H1 (cell line): ENCODE measurements at regions of chr10 and their contacts with region 1.

Region 1: GRCh38 chr10:120423431-120424197 is 33.4 kb upstream of the PLPP4 start:
- DNase-seq: peak; percentile 2 to 79
- H3K4me3 ChIP-seq: no peak overlapping the region
- H3K27ac ChIP-seq: no peak overlapping the region
- H3K4me1 ChIP-seq: no peaks in the 10 kb centered on the region
- H3K27me3 ChIP-seq: no peaks in the 10 kb centered on the region
- CTCF ChIP-seq: peak; percentile 77 to 93 (median 83)
- EP300 ChIP-seq: no peak
- POLR2A ChIP-seq: no peak
- RAD21 ChIP-seq: peak; percentile 87 to 92

Region 2: DNA sequence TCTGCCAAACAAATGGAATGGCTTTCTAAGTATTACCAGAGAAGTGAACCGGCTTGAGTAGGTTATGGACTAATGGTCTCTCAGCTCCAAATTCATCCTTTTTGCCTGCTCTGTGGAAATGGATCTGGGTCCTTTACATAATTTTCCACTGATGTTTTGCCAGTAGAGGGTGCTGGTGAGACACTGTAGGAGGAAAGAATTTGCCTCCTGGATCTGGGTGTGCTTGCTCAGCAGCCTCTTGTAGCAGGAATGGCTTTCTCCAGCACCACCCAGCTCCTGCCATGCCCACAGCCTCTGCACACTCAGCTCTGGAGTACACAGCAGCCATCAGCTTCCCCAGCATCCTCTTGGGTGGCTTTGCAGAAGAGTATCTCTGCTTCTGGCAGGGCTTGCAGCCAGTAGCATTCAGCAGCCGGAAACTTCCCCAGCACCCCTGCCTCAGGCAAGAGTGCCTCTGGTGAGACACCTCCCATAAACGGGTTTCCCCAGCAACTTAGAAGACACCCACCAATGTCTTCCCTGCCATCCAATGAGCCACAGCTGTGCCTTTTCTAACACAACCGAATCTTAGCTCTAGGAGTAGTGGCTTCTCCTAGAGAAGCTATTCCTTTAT is 201.6 kb before region 1 on chr10:
- CTCF ChIA-PET with region 1: interaction called, 13 read pairs
- POLR2A ChIA-PET with region 1: no interaction called
- DNase-seq: peak; percentile 39 to 58
- H3K4me3 ChIP-seq: no peak overlapping the region
- H3K27ac ChIP-seq: no peak overlapping the region
- H3K4me1 ChIP-seq: no peaks in the 10 kb centered on the region
- H3K27me3 ChIP-seq: peaks cover 0 to 1% (median 0%) of the 10 kb centered on the region in 4 experiments; a peak in 1 of 7 replicates
- CTCF ChIP-seq: peak; percentile 28 to 84 (median 74)
- EP300 ChIP-seq: no peak
- POLR2A ChIP-seq: no peak
- RAD21 ChIP-seq: peak; percentile 93 to 94

Region 3: GRCh38 chr10:120456626-120457430 is 33.2 kb after region 1 on chr10 and contains the start of gene PLPP4:
- CTCF ChIA-PET with region 1: no interaction called
- POLR2A ChIA-PET with region 1: no interaction called
- DNase-seq: peak in 1 of 2 experiments; percentile 65
- H3K4me3 ChIP-seq: peak within 1 kb of the TSS; percentile 43 to 67 (median 58)
- H3K27ac ChIP-seq: no peak within 1 kb of the TSS
- H3K4me1 ChIP-seq: peaks cover 0 to 8% (median 3%) of the 10 kb centered on the region in 4 experiments; a peak in 6 of 7 replicates
- H3K27me3 ChIP-seq: peaks cover 15 to 42% (median 36%) of the 10 kb centered on the region in 4 experiments
- CTCF ChIP-seq: no peak
- EP300 ChIP-seq: no peak
- POLR2A ChIP-seq: no peak
- RAD21 ChIP-seq: no peak
- total RNA-seq, gene PLPP4: not detected in 2 replicates

Region 4: DNA sequence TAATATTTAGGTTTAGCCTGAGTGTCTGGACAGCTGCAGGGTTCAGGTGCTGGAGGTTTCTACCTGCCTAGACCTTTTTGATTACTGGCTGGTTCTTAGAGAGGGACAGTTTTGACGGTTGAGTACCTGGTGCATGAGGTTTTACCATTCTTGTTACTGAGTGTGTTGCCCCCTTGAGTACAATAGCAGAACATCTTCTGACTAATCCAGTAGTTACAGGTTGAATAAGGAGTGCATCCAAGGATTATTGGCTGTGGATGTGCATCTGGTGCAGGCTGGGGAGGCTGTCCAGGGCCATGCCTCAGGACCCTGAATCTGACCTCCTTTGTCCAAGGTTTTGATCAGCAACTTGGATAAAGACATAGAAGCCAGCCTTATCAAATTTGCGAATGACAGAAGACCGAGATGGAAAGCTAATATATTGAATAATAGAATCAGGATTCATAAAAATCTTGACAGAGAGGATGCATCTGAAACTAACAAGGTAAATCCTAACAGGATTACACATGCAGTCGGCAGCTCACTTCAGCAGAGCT is 56.5 kb after region 1 on chr10:
- CTCF ChIA-PET with region 1: interaction called, 11 read pairs
- POLR2A ChIA-PET with region 1: no interaction called
- DNase-seq: peak in 1 of 2 experiments; percentile 17
- H3K4me3 ChIP-seq: no peak overlapping the region
- H3K27ac ChIP-seq: no peak overlapping the region
- H3K4me1 ChIP-seq: no peaks in the 10 kb centered on the region; a peak in 1 of 7 replicates
- H3K27me3 ChIP-seq: no peaks in the 10 kb centered on the region
- CTCF ChIP-seq: peak in 1 of 3 experiments; percentile 55; a peak in 2 of 4 replicates
- EP300 ChIP-seq: no peak
- POLR2A ChIP-seq: no peak
- RAD21 ChIP-seq: peak; percentile 21 to 51; a peak in 2 of 4 replicates

Region 5: GRCh38 chr10:120588311-120588710 is 164.7 kb after region 1 on chr10:
- CTCF ChIA-PET with region 1: interaction called, 10 read pairs
- POLR2A ChIA-PET with region 1: no interaction called
- DNase-seq: no peak
- H3K4me3 ChIP-seq: no peak overlapping the region
- H3K27ac ChIP-seq: no peak overlapping the region
- H3K4me1 ChIP-seq: no peaks in the 10 kb centered on the region
- H3K27me3 ChIP-seq: no peaks in the 10 kb centered on the region
- CTCF ChIP-seq: no peak
- EP300 ChIP-seq: no peak
- POLR2A ChIP-seq: no peak
- RAD21 ChIP-seq: no peak

Region 6: GRCh38 chr10:120634629-120635028 is 211.0 kb after region 1 on chr10:
- CTCF ChIA-PET with region 1: interaction called, 13 read pairs
- POLR2A ChIA-PET with region 1: no interaction called
- DNase-seq: peak; percentile 54 to 93
- H3K4me3 ChIP-seq: no peak overlapping the region
- H3K27ac ChIP-seq: no peak overlapping the region
- H3K4me1 ChIP-seq: peaks cover 0 to 6% (median 3%) of the 10 kb centered on the region in 4 experiments; a peak in 2 of 7 replicates
- H3K27me3 ChIP-seq: no peaks in the 10 kb centered on the region
- CTCF ChIP-seq: peak; percentile 52 to 74 (median 58)
- EP300 ChIP-seq: no peak
- POLR2A ChIP-seq: no peak
- RAD21 ChIP-seq: peak; percentile 39 to 55

Region 7: GRCh38 chr10:120735773-120736371 is 312.3 kb after region 1 on chr10:
- CTCF ChIA-PET with region 1: interaction called, 25 read pairs
- POLR2A ChIA-PET with region 1: no interaction called
- DNase-seq: no peak
- H3K4me3 ChIP-seq: no peak overlapping the region
- H3K27ac ChIP-seq: no peak overlapping the region
- H3K4me1 ChIP-seq: no peaks in the 10 kb centered on the region
- H3K27me3 ChIP-seq: peaks cover 0 to 2% (median 0%) of the 10 kb centered on the region in 4 experiments; a peak in 2 of 7 replicates
- CTCF ChIP-seq: peak in 2 of 3 experiments; percentile 42 to 60; a peak in 2 of 4 replicates
- EP300 ChIP-seq: no peak
- POLR2A ChIP-seq: no peak
- RAD21 ChIP-seq: peak; percentile 49 to 53